HepG2 (cell line): ENCODE measurements at regions of chr10 and their contacts with region 1.

Region 1: GRCh38 chr10:73131301-73131700 is 21.0 kb downstream of the NUDT13 start:
- DNase-seq: no peak
- ATAC-seq: no peak
- H3K4me3 ChIP-seq: no peak overlapping the region
- H3K27ac ChIP-seq: peak overlapping the region; percentile 73
- H3K4me1 ChIP-seq: peaks cover 44% of the 10 kb centered on the region
- H3K27me3 ChIP-seq: no peaks in the 10 kb centered on the region
- CTCF ChIP-seq: no peak
- EP300 ChIP-seq: no peak
- POLR2A ChIP-seq: no peak
- RAD21 ChIP-seq: no peak

Region 2: DNA sequence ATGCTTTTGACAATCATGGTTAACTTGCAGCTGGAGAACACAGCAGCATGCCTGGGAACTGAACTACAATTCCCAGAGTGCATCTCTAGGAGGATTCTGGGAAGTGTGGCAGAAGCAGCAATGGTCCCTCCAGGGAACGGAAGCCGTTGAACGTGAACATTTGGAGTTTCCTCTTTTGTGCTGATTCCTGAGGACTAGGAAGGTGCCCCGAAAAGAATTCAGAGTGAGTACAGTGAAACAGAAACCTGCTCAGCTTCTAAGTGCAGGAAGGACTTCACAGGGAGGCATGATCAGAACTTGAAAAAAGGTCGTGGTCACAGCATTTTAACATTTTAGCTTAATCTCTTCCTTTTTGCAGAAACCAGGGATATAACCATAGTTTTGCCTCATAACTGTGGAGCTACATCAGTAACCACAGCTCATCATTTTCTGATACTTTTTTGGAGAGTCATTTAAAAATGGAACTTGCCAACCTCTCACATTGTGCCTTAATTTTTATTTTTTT is 20.9 kb before region 1 on chr10 and contains the start of gene NUDT13:
- CTCF ChIA-PET with region 1: no interaction called
- POLR2A ChIA-PET with region 1: interaction called, 26 read pairs
- in situ Hi-C with region 1: no loop called
- intact Hi-C with region 1: no loop called
- DNase-seq: peak; percentile 83
- ATAC-seq: peak; percentile 98
- H3K4me3 ChIP-seq: peak within 1 kb of the TSS; percentile 45 to 82 (median 80)
- H3K27ac ChIP-seq: peak within 1 kb of the TSS; percentile 96
- H3K4me1 ChIP-seq: peaks cover 11% of the 10 kb centered on the region
- H3K27me3 ChIP-seq: no peaks in the 10 kb centered on the region
- CTCF ChIP-seq: no peak
- EP300 ChIP-seq: no peak
- POLR2A ChIP-seq: peak; percentile 68 to 71
- RAD21 ChIP-seq: no peak
- total RNA-seq, gene NUDT13: 2.5 and 4.2 TPM in 2 replicates